Sciatic nerve (tissue), 2 donors: ENCODE measurements at regions of chr7 and their contacts with region 1.

Region 1: DNA sequence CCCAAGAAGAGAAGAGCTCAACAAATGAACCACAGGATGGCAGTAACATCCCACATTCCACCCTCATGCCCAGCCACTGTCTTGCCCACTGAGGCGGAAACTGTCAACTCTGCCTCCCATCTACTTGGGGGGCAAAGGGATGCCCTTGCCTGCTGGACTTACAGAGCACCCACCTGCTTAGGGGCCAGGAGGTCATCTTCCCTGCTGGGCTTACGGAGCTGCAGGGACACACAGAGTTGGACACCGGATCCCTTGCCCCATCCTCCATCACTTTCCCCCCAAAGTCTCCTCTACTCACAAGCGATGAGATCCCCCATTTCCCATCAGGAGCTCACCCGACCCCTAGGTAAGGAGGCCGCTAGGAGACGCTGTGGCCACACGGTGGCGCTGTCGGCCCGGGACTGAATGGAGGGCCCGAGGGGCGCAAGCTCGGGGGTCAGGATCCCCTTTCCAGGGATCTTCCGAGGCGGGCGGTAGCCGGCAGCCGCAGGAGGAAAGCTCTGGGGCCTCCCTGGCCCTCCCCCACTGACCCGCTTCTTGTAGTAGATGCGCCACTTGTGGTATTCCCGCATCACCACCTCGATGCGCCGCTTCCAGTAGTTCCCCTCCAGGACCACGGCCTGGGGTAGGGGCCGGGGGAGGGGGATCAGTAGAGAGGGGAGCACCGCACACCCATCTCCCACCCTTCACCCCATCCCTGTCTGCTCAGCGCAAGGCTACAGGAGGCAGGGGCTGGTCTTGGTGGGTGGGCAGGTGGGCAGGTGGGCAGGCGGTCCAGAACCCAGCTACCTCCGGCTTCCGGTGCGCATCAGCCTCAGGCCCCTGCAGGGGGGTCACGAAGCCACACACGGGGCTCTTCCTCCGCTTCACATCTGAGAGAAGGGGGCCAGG is 17.3 kb downstream of the MLXIPL start:
- DNase-seq: peak; percentile 77
- ATAC-seq: peak; percentile 77

Region 2: DNA sequence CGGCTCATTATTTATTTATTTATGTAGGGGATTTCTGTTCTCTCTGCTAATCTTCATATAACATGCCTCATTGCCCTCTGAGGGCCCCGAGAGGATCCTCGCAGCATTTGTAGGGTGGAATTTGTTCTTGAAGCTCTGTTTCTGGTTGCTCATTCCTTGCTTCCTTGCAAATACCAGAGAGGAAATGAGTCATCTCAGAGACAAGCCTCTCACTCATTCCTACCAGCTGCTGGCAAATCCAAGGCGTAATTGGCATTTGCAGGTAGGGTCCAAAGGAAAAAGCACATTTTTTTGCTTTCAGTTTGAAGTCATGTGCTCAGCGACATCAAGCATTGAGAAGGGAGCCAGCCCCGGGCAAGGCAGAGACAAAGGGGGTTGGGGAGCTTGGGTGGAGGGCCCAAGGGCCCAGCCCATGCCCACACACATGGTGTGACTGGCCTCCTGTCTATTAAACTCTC is 1973.5 kb before region 1 on chr7:
- intact Hi-C with region 1: no loop called
- DNase-seq: no peak
- ATAC-seq: peak; percentile 60

Region 3: DNA sequence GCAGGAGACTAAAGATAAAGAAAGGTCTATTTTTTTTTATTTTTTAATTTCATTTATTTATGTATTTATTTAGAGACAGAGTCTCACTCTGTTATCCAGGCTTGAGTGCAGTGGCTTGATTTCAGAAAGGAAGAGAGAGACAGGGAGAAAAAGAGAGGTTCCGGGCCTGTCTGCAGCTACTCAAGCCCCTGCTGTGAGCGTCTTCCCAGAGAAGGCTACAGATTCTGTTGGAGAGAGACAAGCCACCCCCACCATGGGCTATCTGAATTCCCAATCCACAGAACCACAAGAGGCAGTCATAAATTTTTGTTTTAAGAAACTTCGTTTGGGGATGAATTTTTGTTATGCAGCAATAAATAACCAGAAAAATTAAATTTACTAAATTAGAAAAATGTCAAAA is 1263.1 kb before region 1 on chr7:
- intact Hi-C with region 1: no loop called
- DNase-seq: no peak
- ATAC-seq: no peak

Region 4: GRCh38 chr7:73437621-73438416 is 169.2 kb before region 1 on chr7:
- intact Hi-C with region 1: no loop called
- DNase-seq: no peak
- ATAC-seq: peak; percentile 58

Region 5: GRCh38 chr7:73726083-73726466 is 119.0 kb after region 1 on chr7:
- intact Hi-C with region 1: loop called (anchors 5 kb)
- DNase-seq: no peak
- ATAC-seq: no peak